Cardiac septum (tissue), 1 donor: ENCODE measurements at regions of chr3 and their contacts with region 1.

Region 1: DNA sequence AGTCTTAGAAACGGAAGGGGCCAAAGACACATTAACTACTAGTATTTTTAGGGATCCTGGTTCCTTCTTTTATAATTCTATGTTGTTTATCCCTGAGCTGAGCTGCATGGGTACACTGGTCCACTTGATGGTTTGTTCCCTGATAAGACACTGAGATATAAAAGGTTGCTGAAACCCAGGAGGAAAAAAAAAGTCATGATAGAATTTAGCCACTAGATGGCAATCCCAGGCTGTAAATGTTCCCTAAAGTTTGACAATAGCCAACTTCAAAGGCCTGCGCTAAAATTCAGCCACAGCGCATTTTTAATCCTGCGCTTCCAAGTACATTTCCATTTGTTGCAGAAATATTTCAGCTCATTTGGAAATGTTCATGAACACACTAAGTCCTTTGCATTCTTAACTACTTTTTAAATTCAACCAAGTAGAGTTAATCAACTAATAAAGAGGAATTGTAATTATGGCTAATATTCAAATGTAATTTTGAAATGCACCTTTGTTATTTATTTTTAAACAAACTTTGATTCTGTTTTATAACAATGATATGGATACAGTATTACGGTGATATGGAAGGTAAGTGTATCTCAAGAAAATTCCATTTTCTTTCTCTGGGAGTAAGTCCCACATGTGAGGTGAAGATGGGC is 249.3 kb upstream of the FEZF2 start:
- DNase-seq: no peak

Region 2: DNA sequence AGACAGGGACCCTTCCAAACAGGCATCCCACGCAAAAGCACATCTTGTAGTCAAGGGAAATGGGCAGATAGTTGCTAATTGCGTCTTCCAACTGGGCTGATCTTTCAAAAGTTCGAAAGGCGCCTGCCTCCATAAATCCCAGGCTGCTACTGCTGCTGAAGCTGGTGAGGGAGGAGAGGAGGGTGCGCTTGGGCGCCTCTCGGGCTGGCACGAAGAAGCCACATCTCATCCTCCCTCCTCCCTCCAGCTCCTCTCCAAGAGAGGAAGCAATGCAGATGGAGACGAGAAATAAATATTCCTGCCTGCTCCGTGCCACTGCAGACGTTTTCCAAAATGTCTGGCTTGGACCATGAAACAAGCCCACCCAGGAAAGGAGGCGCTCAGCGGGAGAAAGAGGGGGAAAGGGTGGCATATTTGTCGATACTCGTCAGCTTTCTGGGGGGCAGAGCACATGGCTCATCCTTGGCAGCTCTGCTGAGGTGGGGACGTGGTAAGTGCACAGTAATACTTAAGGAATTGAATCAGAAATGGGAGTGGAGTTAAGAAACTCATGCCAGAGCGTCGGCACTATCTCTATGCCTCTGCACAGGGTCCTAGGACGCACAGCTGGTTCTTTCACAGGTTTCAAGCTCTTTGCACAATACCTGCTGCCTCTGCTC is 160.4 kb before region 1 on chr3:
- intact Hi-C with region 1: no loop called
- DNase-seq: no peak

Region 3: DNA sequence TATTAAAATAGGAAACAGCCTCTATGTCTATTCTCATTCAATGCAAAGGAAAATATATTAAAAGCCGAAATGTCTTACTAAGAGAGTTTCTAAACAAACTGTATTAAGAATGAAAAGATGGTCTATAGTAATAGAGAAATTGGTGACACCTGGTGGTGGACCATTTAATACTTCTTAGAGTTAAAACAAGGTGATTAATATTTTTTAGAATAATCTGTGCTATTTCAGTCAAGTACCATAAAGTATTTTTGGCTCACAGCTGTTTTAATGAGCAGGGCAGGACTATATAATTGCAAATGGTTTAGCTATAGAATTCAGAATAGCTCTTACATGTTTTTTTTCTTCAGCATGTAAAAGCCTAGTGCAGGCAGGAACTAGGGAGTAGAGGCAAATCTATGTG is 711.2 kb after region 1 on chr3:
- intact Hi-C with region 1: loop called (anchors 10 kb)
- DNase-seq: no peak

Region 4: GRCh38 chr3:63818281-63819150 is 1195.8 kb after region 1 on chr3:
- intact Hi-C with region 1: loop called (anchors 5 kb)
- DNase-seq: no peak